Activated naive CD4-positive, alpha-beta T cell treated with anti-CD3 and anti-CD28 coated beads for 36 hours (primary cell): ENCODE measurements at regions of chr5 and their contacts with region 1.

Region 1: GRCh38 chr5:147822686-147823491 is 8.6 kb downstream of the SPINK1 start:
- DNase-seq: peak; percentile 40
- H3K4me3 Mint-ChIP-seq: no peak overlapping the region
- H3K27ac Mint-ChIP-seq: no peak overlapping the region
- H3K4me1 Mint-ChIP-seq: no peaks in the 10 kb centered on the region
- H3K27me3 Mint-ChIP-seq: peaks cover 6% of the 10 kb centered on the region

Region 2: GRCh38 chr5:147453875-147454814 is 368.7 kb before region 1 on chr5:
- CTCF ChIA-PET with region 1: no interaction called
- intact Hi-C with region 1: loop called (anchors 1 kb)
- DNase-seq: peak; percentile 74
- H3K4me3 Mint-ChIP-seq: peak overlapping the region; percentile 76
- H3K27ac Mint-ChIP-seq: no peak overlapping the region
- H3K4me1 Mint-ChIP-seq: peaks cover 8% of the 10 kb centered on the region
- H3K27me3 Mint-ChIP-seq: peaks cover 68% of the 10 kb centered on the region

Region 3: DNA sequence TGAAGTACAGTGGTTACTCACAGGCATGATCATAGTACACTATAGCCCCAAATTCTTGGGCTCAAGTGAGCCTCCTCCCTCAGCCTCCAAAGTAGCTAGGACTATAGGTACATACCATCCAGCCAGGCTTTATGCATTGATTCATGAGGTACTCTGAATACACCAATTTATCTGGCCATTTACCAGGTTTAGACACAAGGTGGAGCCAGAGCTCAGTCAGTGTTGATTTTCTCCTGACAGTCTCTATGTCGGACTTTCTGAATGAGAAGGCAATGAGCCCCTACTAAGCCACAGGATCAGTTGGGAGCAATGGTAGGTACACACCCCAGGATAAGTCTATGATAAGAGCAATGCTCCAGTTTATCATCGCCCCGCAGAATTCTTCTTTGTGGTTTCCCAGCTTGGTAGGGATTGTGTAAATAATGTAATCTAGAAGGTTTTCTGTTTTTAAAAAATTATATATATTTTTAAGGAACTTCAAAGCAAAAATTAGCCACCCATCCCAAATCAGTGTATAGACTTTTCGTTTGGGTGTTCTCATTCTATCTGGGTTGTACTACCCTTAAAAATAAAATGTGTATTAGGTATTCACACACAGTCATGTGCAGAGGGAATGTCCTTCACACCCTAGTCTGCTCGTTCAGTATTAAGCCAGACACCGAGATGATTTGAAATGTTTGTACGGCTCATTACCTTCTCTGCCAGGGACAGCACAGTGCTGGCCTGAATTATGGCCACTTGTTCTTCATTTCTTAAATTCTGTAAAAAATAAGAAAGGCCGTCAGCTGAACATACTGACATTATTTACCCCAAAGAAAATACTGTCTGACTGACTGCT is 194.6 kb before region 1 on chr5:
- CTCF ChIA-PET with region 1: interaction called, 25 read pairs
- intact Hi-C with region 1: no loop called
- DNase-seq: peak; percentile 64
- H3K4me3 Mint-ChIP-seq: no peak overlapping the region
- H3K27ac Mint-ChIP-seq: no peak overlapping the region
- H3K4me1 Mint-ChIP-seq: no peaks in the 10 kb centered on the region
- H3K27me3 Mint-ChIP-seq: peaks cover 9% of the 10 kb centered on the region

Region 4: DNA sequence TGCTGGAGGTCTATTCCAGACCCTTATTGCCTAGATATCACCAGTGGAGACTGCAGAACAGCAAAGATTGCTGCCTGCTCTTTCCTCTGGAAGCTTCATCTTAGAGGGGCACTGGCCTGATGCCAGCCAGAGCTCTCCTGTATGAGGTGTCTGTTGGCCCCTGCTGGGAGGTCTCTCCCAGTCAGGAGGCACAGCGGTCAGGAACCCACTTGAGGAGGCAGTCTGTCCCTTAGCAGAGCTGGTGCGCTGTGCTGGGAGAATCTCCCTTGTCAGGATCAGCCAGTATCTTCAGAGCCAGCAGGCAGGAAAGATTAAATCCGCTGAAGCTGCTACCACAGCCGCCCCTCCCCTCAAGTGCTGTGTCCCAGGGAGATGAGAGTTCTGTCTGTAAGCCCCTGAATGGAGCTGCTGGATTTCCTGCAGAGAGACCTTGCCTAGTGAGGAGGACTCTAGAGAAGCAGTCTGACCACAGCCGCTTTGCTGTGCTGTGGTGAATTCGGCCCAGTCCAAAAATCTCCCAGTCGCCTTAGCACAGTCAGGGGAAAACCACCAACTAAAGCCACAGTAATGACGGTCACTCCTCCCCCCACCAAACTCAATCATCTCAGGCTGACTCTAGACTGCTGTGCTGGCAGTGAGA is 164.5 kb before region 1 on chr5:
- CTCF ChIA-PET with region 1: no interaction called
- intact Hi-C with region 1: no loop called
- DNase-seq: no peak
- H3K4me3 Mint-ChIP-seq: no peak overlapping the region
- H3K27ac Mint-ChIP-seq: no peak overlapping the region
- H3K4me1 Mint-ChIP-seq: no peaks in the 10 kb centered on the region
- H3K27me3 Mint-ChIP-seq: peaks cover 2% of the 10 kb centered on the region